Activated CD4-positive, alpha-beta T cell treated with anti-CD3 and anti-CD28 coated beads for 36 hours (primary cell): ENCODE measurements at regions of chr13 and their contacts with region 1.

Region 1: DNA sequence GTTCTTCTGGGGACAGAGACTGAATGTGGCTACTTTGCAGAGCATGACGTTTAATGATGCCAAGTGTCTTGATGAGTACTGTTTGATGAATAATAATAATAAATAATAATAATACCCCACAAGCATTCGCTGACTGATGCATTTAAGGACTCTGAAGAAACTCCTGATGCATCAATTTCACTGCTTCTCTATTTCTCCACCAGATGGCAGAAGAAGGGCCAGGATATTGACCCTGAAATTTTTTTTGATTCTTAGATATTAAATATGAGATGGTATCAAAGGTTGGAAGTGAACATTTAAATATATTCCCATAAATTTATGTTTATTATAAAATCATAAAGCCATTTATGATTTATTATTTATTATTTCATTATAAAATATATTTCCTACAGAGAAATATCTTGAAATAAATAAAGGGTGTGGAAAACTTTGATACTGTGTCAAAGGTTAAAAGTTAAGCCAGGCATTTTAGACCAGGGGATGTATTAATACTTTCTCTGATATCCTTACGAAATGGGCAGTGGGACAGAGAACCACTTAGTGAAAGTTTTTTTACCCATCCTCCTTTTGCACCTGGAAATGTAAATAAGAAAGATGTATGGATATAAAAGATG is 170.9 kb downstream of the LACC1 start:
- DNase-seq: no peak
- ATAC-seq: no peak
- H3K4me3 Mint-ChIP-seq: no peak overlapping the region
- H3K27ac Mint-ChIP-seq: no peak overlapping the region
- H3K4me1 Mint-ChIP-seq: peaks cover 4% of the 10 kb centered on the region
- H3K27me3 Mint-ChIP-seq: peaks cover 25% of the 10 kb centered on the region

Region 2: GRCh38 chr13:44141725-44142539 is 91.4 kb after region 1 on chr13:
- CTCF ChIA-PET with region 1: no interaction called
- POLR2A ChIA-PET with region 1: no interaction called
- intact Hi-C with region 1: loop called in 1 of 2 experiments (anchors 2 kb)
- DNase-seq: peak; percentile 96
- ATAC-seq: peak; percentile 100
- H3K4me3 Mint-ChIP-seq: peak overlapping the region; percentile 87
- H3K27ac Mint-ChIP-seq: peak overlapping the region; percentile 90
- H3K4me1 Mint-ChIP-seq: peaks cover 15% of the 10 kb centered on the region
- H3K27me3 Mint-ChIP-seq: peaks cover 4% of the 10 kb centered on the region

Region 3: GRCh38 chr13:44470638-44471562 is 420.3 kb after region 1 on chr13:
- CTCF ChIA-PET with region 1: no interaction called
- POLR2A ChIA-PET with region 1: no interaction called
- intact Hi-C with region 1: loop called in 1 of 2 experiments (anchors 1 kb)
- DNase-seq: no peak
- ATAC-seq: no peak
- H3K4me3 Mint-ChIP-seq: no peak overlapping the region
- H3K27ac Mint-ChIP-seq: no peak overlapping the region
- H3K4me1 Mint-ChIP-seq: no peaks in the 10 kb centered on the region
- H3K27me3 Mint-ChIP-seq: no peaks in the 10 kb centered on the region